GM10248 (cell line): ENCODE measurements at regions of chr14 and their contacts with region 1.

Region 1: GRCh38 chr14:23910101-23910875 is 43.3 kb upstream of the DHRS4 start:
- DNase-seq: peak; percentile 50
- CTCF ChIP-seq: peak; percentile 72

Region 2: GRCh38 chr14:23588884-23589598 is 321.2 kb before region 1 on chr14:
- CTCF ChIA-PET with region 1: interaction called, 46 read pairs
- POLR2A ChIA-PET with region 1: no interaction called
- DNase-seq: peak; percentile 89
- CTCF ChIP-seq: peak; percentile 86

Region 3: GRCh38 chr14:23665375-23666192 is 244.7 kb before region 1 on chr14:
- CTCF ChIA-PET with region 1: interaction called, 37 read pairs
- POLR2A ChIA-PET with region 1: no interaction called
- DNase-seq: no peak
- CTCF ChIP-seq: peak; percentile 63

Region 4: GRCh38 chr14:23692416-23692815 is 217.9 kb before region 1 on chr14:
- CTCF ChIA-PET with region 1: no interaction called
- POLR2A ChIA-PET with region 1: no interaction called
- DNase-seq: no peak
- CTCF ChIP-seq: no peak

Region 5: DNA sequence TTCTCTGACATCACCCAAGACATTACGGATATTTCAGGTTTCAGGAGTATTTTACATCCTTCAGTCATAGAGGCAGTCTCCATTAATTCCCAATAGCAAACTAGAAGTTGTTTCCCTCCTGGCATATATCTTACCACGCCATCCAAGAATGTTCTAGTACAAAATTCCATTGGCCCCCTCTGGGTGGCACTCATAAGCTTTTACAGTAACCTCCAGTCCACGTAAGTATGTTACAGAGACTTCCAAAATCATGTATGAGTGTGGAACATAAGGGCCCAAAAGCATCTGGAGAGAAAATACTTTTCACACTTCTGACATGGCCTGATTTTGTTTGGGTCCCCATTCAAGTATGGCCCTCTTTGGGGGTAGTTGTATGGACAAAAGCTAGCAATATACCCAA is 14.8 kb before region 1 on chr14:
- CTCF ChIA-PET with region 1: interaction called, 11 read pairs
- POLR2A ChIA-PET with region 1: no interaction called
- DNase-seq: no peak
- CTCF ChIP-seq: no peak

Region 6: GRCh38 chr14:24789378-24789884 is 879.1 kb after region 1 on chr14:
- CTCF ChIA-PET with region 1: no interaction called
- POLR2A ChIA-PET with region 1: no interaction called
- DNase-seq: no peak
- CTCF ChIP-seq: no peak